ENCODE measurements at regions of chr4 and their contacts with region 1.

Region 1: DNA sequence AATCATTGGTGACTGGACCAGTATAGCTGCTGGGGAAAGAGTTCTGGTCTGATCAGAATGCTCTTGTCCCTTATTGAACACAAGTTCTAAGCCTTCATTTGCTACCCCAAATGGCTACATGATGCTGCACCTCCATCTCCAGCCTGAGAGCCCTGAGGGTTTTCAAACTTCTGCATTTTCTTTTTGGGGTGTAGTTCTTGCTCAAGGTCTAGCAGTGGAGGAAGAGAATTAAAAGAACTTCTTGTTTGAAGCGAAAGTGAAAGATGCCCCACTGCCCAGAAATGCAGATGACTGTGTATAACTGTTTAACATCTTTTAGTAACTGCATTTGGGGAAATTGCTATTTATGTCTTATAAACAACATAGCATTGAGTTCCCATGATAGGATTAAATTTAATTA is 38.5 kb downstream of the LAMTOR3 start:
- DNase-seq: peak; percentile 49
- ATAC-seq: peak; percentile 16
- H3K4me3 Mint-ChIP-seq: no peak overlapping the region
- H3K27ac Mint-ChIP-seq: peak overlapping the region; percentile 70
- H3K4me1 Mint-ChIP-seq: peaks cover 67% of the 10 kb centered on the region
- H3K27me3 Mint-ChIP-seq: no peaks in the 10 kb centered on the region

Region 2: DNA sequence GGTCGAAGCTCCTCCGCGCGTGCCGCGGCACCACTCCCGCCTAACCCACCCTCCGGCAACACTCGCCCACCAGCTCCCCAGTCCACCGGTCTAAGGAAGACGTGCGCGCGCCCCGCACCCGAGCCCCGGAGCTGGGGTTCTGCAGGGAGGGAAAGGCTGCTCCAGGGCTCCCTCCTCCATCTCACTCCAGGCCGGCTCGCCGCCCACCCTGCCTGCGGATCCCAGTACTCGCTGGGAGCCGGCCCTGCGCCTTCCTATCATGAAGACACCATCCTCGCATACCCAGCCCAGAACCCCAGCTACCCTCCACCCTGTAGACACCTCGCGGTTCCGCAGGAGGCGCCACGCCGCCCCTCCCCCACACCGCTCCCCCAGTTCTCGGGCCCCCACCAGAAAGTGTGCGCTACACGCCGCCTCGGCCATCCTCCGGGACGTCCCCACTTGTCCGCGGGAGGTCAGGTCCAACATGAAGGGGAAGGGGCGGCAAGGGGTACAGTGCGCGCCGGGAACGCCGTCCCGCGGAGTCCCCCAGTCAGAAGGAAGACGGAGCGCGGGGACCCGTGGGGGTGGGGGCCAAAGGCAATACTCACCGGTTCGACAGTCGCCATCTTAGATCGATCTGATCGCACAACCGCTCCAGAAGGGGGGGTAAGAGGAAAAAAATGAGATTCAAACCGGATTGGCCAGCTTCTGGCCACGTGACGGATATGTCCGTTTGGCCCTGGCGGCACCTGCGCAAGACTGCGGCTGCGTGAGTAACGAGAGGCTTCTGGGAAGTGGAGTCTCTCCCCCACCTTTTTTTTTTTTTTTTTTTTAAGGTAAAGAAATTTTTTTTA is 927.0 kb before region 1 on chr4 and contains the start of gene EIF4E:
- CTCF ChIA-PET with region 1: no interaction called
- POLR2A ChIA-PET with region 1: no interaction called
- intact Hi-C with region 1: loop called in 1 of 2 experiments (anchors 1 kb)
- DNase-seq: peak; percentile 98
- ATAC-seq: peak; percentile 80
- H3K4me3 Mint-ChIP-seq: peak within 1 kb of the TSS; percentile 92
- H3K27ac Mint-ChIP-seq: peak within 1 kb of the TSS; percentile 100
- H3K4me1 Mint-ChIP-seq: peaks cover 47% of the 10 kb centered on the region
- H3K27me3 Mint-ChIP-seq: no peaks in the 10 kb centered on the region
- total RNA-seq, gene EIF4E: 132 to 149 TPM

Region 3: DNA sequence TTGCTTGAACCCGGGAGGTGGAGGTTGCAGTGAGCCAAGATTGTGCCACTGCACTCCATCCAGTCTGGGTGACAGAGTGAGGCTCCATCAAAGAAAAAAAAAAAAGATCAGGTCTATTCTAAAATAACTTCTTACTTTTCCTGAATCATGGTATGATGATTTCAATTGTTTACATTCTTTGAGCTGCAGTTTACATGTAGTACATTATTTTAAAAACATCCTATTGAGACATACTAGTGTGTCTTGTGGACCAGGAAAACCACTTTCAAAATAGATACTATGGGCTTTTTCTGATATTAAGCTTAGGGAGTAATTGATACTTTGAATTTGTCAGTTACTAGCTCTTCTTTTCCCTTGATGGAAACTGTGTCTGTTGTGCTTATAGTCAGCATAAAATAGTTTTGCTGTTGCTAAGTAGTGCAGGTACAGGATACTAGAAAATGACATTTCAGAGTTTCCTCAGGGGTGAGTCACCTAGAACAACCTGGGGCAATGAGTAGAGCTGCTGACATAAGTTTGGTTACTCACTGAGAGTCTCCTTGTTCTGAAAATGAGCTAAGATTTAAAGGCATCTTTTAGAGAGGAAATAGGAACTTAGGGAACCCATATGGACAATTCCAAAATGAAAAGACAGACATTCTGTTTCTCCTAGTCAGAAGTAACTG is 144.9 kb before region 1 on chr4:
- CTCF ChIA-PET with region 1: no interaction called
- POLR2A ChIA-PET with region 1: no interaction called
- intact Hi-C with region 1: loop called in 1 of 2 experiments (anchors 5 kb)
- DNase-seq: peak; percentile 5
- ATAC-seq: peak; percentile 100
- H3K4me3 Mint-ChIP-seq: no peak overlapping the region
- H3K27ac Mint-ChIP-seq: no peak overlapping the region
- H3K4me1 Mint-ChIP-seq: peaks cover 13% of the 10 kb centered on the region
- H3K27me3 Mint-ChIP-seq: peaks cover 11% of the 10 kb centered on the region

Region 4: DNA sequence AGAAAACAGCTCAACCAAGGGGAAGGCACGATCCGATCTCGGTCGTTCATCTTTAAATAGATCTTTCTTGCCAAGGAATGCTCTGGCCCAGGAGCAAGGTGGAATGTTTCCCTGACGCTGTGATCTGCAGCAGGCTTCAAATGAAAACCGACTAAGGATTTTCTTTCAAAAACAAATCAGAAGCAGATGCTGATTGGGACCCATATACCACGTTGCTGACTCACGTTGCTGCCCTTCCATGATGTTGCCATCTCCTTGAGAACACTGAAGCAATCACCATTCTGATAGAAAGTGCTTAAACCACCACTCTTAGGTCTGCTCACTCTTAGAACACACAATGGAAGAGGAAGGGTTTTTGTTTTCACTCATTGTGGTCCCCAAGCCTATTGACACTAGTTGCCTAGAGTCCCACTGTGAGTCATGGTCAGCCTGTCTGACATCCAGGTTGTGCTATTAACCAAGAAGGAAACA is 12.5 kb after region 1 on chr4:
- CTCF ChIA-PET with region 1: interaction called, 3 read pairs
- POLR2A ChIA-PET with region 1: no interaction called
- intact Hi-C with region 1: loop called (anchors 1 kb)
- DNase-seq: peak; percentile 49
- ATAC-seq: peak; percentile 95
- H3K4me3 Mint-ChIP-seq: no peak overlapping the region
- H3K27ac Mint-ChIP-seq: peak overlapping the region; percentile 72
- H3K4me1 Mint-ChIP-seq: peaks cover 12% of the 10 kb centered on the region
- H3K27me3 Mint-ChIP-seq: no peaks in the 10 kb centered on the region

Region 5: DNA sequence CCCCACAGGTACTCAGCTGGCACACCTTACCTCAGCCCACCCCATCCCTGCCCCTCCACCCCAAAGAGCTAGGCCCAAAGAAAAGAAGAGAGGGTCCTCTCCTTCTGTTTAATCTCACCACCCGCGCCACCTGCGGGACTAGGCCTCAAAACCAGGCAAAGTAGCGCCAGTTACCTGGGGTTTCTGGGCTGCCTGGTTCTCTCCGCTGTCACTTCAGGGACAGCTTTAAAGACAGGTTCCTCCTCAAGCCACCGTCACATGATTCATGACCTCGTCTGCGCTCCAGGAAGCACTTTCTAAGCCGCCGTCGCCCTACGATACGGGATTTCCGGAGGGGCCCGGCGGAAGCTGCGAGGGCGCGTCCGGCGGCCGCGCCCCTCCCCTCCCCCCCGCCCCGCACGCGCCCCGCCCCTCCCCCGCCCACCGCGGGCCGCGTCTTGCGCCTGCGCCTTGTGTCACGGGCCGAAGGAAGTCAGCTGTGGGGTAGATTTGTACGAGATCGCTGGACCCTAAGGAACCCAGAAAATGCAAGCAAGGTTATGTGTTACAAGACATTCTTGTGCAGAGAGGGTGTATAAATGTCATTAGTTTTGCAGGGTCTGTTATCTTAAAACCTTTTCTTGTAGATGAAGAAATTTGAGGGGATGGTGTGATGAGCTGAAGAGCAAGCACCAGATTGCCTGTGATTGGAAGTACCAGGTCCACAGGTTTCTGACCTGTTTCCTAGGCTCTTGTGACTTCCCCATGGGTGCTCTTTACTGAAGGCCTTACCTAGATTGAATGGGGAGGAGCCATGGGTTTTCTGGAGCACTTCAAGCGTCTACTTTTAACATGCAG is 38.7 kb after region 1 on chr4 and contains the start of gene LAMTOR3:
- CTCF ChIA-PET with region 1: no interaction called
- POLR2A ChIA-PET with region 1: interaction called, 4 read pairs
- intact Hi-C with region 1: loop called (anchors 2 to 5 kb)
- DNase-seq: peak; percentile 94
- ATAC-seq: peak; percentile 100
- H3K4me3 Mint-ChIP-seq: peak within 1 kb of the TSS; percentile 96
- H3K27ac Mint-ChIP-seq: peak within 1 kb of the TSS; percentile 94
- H3K4me1 Mint-ChIP-seq: peaks cover 32% of the 10 kb centered on the region
- H3K27me3 Mint-ChIP-seq: no peaks in the 10 kb centered on the region
- total RNA-seq, gene LAMTOR3: 28.5 to 30.4 TPM

Region 6: DNA sequence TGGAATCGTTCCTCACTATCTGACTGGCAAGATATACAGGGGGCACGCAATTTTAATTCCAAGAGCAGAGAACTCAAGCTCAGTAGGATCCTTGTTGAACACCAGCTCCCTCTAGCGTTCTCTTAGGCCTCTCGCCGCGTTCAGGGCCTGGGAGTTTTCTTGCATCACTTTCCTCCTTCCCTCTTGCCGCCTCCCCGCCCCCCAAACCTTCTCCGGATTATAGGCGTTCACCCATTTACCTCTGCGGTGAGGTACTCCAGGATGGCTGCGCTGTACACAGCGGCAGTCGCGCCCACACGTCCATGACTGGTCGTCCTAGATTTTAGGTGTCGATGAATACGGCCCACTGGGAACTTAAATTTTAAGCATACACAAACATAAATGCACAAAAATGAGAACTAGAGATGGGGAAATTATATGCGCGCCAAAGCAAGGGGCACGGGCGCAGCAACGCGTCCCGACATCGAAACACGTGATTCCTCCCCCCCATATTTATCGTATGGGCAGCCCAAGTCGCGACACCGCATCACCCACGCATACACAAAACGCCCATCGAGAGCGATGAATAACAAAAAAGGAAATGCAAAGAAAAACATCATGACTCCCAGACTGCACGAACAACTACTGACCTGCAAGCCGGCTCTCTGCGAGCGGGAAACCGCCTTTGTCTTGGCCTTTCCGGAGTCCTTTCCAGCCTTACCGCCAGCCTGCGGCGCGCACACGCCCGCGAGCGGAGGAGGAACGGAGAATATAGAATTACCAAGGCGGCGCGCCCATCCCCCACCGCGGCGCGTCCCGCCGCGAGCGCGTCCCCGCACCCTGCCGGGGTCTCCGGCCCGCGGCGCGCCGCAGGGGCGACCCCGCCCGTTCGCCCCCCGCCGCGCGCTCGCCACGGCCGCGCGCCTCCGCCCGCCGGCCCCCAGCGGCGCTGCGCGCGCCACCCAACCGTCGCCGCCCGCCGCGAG is 93.6 kb after region 1 on chr4:
- CTCF ChIA-PET with region 1: interaction called, 3 read pairs
- POLR2A ChIA-PET with region 1: no interaction called
- intact Hi-C with region 1: loop called (anchors 1 kb)
- DNase-seq: peak; percentile 96
- ATAC-seq: peak; percentile 52
- H3K4me3 Mint-ChIP-seq: no peak overlapping the region
- H3K27ac Mint-ChIP-seq: no peak overlapping the region
- H3K4me1 Mint-ChIP-seq: peaks cover 33% of the 10 kb centered on the region
- H3K27me3 Mint-ChIP-seq: no peaks in the 10 kb centered on the region

Region 7: GRCh38 chr4:100362366-100362765 is 506.7 kb after region 1 on chr4:
- CTCF ChIA-PET with region 1: no interaction called
- POLR2A ChIA-PET with region 1: no interaction called
- intact Hi-C with region 1: no loop called
- DNase-seq: no peak
- ATAC-seq: no peak
- H3K4me3 Mint-ChIP-seq: no peak overlapping the region
- H3K27ac Mint-ChIP-seq: no peak overlapping the region
- H3K4me1 Mint-ChIP-seq: no peaks in the 10 kb centered on the region
- H3K27me3 Mint-ChIP-seq: peaks cover under 1% of the 10 kb centered on the region

Measured in activated CD4-positive, alpha-beta T cell treated with anti-CD3 and anti-CD28 coated beads for 36 hours (primary cell).